GM10248 (cell line): ENCODE measurements at regions of chr5 and their contacts with region 1.

Region 1: DNA sequence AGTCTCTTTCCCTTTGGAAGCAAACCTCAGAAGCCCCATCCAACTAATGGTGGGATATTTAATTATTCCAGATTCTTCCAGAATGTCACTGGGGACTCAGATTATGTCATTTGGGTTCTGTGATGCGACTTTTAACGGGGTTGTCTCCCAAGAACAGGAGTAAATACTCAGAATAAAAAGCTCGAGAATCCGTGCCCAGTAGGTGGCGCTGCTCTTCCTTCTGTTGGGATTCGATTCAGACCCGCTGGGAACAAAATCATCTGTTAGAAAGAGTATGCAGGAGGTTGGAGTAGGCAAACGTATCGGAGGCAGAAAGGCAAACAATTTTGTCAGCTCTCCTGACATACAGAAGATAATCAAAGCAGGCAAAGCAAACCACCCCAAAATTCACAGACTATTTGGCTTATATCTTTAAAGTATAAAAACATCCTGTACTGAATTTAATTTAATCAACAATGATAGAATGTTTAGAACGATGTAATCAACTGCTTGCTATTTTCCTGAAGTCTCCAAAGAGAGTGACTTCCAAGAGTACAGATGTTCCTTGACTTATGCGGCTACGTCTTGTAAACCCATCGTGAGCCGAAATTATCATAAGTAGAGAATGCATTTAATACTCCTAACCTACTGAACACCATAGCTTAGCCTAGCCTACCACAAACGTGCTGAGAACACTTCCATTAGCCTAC is 169.8 kb upstream of the RAI14 start:
- DNase-seq: peak; percentile 65
- CTCF ChIP-seq: peak; percentile 87

Region 2: DNA sequence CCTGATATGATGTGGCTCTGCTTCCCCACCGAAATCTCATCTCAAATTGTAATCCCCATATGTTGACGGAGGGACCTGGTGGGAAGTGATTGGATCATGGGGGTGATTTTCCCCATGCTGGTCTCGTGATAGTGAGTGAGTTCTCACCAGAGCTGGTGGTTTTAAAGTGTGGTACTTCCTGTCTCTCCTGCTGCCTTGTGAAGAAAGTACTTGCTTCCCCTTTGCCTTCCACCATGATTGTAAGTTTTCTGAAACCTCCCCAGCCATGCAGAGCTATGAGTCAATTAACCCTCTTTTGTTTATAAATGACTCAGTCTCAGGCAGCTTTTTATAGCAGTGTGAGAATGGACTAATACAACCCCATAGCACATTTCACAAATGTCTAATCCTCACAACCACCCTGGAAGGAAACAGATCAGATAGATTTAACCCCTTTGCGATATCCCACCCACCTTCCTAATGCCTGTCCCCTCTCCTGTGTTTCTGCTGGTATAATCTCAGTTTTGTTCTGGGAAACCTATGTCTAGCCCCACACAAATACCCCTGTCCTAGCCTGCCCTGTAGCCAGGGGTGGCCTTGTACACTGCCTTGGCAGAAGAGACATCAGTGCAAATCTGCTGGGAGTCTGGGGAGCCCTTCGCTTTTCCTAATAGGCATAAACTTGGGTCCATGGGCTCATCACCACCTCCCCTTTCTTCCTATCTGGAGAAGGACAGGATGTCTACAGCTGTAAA is 12.9 kb after region 1 on chr5:
- CTCF ChIA-PET with region 1: interaction called, 70 read pairs
- POLR2A ChIA-PET with region 1: no interaction called
- DNase-seq: peak; percentile 37
- CTCF ChIP-seq: no peak

Region 3: GRCh38 chr5:34522599-34523386 is 36.5 kb after region 1 on chr5:
- CTCF ChIA-PET with region 1: interaction called, 22 read pairs
- POLR2A ChIA-PET with region 1: no interaction called
- DNase-seq: peak; percentile 72
- CTCF ChIP-seq: peak; percentile 69

Region 4: GRCh38 chr5:34639852-34640605 is 153.7 kb after region 1 on chr5:
- CTCF ChIA-PET with region 1: no interaction called
- POLR2A ChIA-PET with region 1: no interaction called
- DNase-seq: no peak
- CTCF ChIP-seq: no peak

Region 5: DNA sequence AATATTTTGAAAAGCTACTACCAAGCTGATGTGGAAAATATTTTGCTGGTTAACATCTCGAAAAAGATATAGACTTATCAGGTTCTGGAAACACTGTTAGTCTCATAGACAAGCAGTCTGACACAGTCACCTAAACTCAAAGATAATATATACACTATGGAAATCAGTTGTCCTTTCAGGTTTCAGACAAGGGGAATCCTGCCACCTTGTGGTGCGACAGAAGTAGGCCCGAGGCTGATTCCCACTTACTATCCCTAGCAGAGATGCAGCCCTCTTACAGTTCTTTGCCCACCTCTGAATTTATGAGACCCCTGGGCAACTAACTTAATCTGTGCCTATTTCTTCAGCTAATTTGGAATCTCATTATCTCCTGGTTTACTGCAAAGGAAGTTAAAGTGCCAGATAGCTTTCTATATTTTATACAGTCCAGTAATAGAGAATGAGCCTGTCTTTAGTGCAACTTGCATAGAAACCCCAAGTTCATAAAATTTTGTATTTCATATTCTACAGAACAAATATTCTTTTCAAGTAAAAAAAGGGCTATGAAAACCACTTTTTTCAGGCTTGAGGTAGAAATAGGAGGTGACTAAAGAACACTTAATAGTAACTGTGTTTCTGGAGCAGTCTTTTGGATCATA is 412.1 kb after region 1 on chr5:
- CTCF ChIA-PET with region 1: interaction called, 104 read pairs
- POLR2A ChIA-PET with region 1: no interaction called
- DNase-seq: peak; percentile 56
- CTCF ChIP-seq: peak; percentile 78

Region 6: GRCh38 chr5:34915139-34915855 is 429.0 kb after region 1 on chr5 and contains the starts of genes BRIX1 and RAD1:
- CTCF ChIA-PET with region 1: interaction called, 12 read pairs
- POLR2A ChIA-PET with region 1: no interaction called
- DNase-seq: peak; percentile 92
- CTCF ChIP-seq: no peak